ENCODE measurements at regions of chr2 and their contacts with region 1.

Region 1: DNA sequence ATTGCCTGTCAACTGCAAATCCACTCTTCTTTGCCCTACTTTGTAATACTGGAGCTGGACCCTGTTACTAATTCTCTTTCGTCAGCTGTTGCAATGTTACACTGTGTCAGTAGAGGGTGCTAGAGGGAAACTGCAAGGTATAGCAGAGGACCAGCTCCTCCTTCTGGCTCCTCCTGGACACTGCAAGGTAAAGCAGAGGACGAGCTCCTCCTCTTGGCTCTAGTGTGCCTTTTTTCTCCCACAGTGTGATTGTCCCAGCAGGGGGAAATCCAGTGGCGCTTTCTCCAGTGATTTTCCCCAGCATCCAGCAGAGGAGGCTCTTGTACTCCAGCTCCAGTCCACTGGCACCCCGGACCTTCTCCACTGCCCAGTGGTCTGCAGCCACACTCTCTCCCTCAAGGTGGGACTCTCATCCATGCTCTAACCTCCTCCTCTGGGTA is 95.6 kb downstream of the CAPN13 start:
- DNase-seq: peak; percentile 91
- ATAC-seq: peak; percentile 83
- H3K4me3 Mint-ChIP-seq: no peak overlapping the region
- H3K27ac Mint-ChIP-seq: no peak overlapping the region
- H3K4me1 Mint-ChIP-seq: peaks cover 11% of the 10 kb centered on the region
- H3K27me3 Mint-ChIP-seq: no peaks in the 10 kb centered on the region

Region 2: GRCh38 chr2:30139131-30139870 is 572.4 kb before region 1 on chr2:
- CTCF ChIA-PET with region 1: interaction called, 10 read pairs
- POLR2A ChIA-PET with region 1: no interaction called
- intact Hi-C with region 1: no loop called
- DNase-seq: peak; percentile 66
- ATAC-seq: peak; percentile 87
- H3K4me3 Mint-ChIP-seq: peak overlapping the region; percentile 48
- H3K27ac Mint-ChIP-seq: peak overlapping the region; percentile 84
- H3K4me1 Mint-ChIP-seq: peaks cover 28% of the 10 kb centered on the region
- H3K27me3 Mint-ChIP-seq: no peaks in the 10 kb centered on the region

Region 3: DNA sequence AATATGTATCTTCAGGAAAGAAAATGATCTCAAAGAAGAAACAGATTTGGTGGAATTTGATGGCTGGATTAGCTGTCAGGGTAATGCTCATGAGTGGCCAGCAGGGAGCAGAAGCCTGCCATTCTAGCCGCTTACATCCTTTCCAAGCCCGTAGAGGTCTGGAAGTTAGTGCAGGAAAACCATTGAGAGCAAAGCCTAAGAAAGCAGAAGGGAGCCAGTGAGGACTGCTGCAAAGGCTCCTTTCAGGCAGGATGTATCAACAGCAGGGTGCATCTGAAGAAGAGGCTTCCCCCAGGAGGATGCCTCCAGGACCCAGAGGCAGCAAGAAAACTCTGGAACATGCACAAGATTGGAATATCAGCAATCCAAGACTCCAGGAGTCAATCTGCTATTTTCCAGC is 503.2 kb before region 1 on chr2:
- CTCF ChIA-PET with region 1: interaction called, 140 read pairs
- POLR2A ChIA-PET with region 1: no interaction called
- intact Hi-C with region 1: loop called (anchors 1 kb)
- DNase-seq: peak; percentile 62
- ATAC-seq: peak; percentile 74
- H3K4me3 Mint-ChIP-seq: no peak overlapping the region
- H3K27ac Mint-ChIP-seq: no peak overlapping the region
- H3K4me1 Mint-ChIP-seq: peaks cover 18% of the 10 kb centered on the region
- H3K27me3 Mint-ChIP-seq: no peaks in the 10 kb centered on the region

Region 4: DNA sequence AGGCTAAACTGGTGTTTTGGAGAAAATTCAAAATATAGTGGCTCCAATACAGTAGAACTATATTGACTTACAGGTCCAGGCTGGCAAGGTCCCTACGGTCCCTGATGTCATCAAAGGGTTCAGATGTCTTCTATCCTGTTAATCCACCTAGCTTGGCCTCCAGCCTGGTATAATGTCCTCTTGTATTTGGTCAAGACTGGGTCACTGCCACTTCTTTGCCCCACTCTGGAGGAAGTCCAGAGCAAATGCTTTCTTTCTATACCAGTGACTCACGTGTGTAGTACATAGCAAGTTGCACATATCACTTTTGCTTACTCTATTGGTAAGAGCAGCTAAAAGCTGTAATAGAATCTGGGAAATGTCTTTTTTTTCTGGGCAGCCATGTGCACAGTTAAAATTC is 183.8 kb before region 1 on chr2:
- CTCF ChIA-PET with region 1: no interaction called
- POLR2A ChIA-PET with region 1: no interaction called
- intact Hi-C with region 1: no loop called
- DNase-seq: no peak
- ATAC-seq: no peak
- H3K4me3 Mint-ChIP-seq: no peak overlapping the region
- H3K27ac Mint-ChIP-seq: no peak overlapping the region
- H3K4me1 Mint-ChIP-seq: peaks cover 1% of the 10 kb centered on the region
- H3K27me3 Mint-ChIP-seq: no peaks in the 10 kb centered on the region

Region 5: GRCh38 chr2:30666307-30666874 is 45.3 kb before region 1 on chr2:
- CTCF ChIA-PET with region 1: interaction called, 11 read pairs
- POLR2A ChIA-PET with region 1: no interaction called
- intact Hi-C with region 1: no loop called
- DNase-seq: no peak
- ATAC-seq: peak; percentile 66
- H3K4me3 Mint-ChIP-seq: no peak overlapping the region
- H3K27ac Mint-ChIP-seq: no peak overlapping the region
- H3K4me1 Mint-ChIP-seq: no peaks in the 10 kb centered on the region
- H3K27me3 Mint-ChIP-seq: peaks cover 3% of the 10 kb centered on the region

Region 6: DNA sequence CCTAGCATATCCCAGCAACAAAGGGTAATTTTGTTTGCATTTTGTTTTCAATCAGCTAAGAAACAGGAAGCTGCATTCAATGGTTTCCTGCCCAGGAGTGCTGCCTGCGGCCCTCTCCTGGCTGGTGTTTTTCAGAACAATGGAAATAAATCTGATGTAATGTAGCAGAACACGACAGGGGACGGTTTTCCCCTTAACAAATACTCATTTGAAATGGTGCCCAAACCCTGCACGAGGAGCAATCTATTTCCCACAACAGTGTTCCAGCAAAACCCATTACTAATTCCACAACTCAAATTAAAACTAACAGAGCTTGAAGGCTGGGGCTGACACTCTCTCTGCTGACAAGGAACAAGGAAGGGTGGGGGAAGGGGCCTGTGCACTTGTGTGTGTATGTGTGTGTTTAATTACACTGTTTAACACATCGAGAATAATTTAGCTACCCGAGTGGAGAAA is 86.9 kb after region 1 on chr2:
- CTCF ChIA-PET with region 1: interaction called, 16 read pairs
- POLR2A ChIA-PET with region 1: no interaction called
- intact Hi-C with region 1: no loop called
- DNase-seq: peak; percentile 32
- ATAC-seq: peak; percentile 61
- H3K4me3 Mint-ChIP-seq: no peak overlapping the region
- H3K27ac Mint-ChIP-seq: peak overlapping the region; percentile 12
- H3K4me1 Mint-ChIP-seq: peaks cover 13% of the 10 kb centered on the region
- H3K27me3 Mint-ChIP-seq: no peaks in the 10 kb centered on the region

Region 7: GRCh38 chr2:31170071-31170698 is 458.5 kb after region 1 on chr2:
- CTCF ChIA-PET with region 1: interaction called, 81 read pairs
- POLR2A ChIA-PET with region 1: interaction called, 3 read pairs
- intact Hi-C with region 1: loop called (anchors 1 kb)
- DNase-seq: peak; percentile 73
- ATAC-seq: peak; percentile 88
- H3K4me3 Mint-ChIP-seq: no peak overlapping the region
- H3K27ac Mint-ChIP-seq: no peak overlapping the region
- H3K4me1 Mint-ChIP-seq: peaks cover under 1% of the 10 kb centered on the region
- H3K27me3 Mint-ChIP-seq: no peaks in the 10 kb centered on the region